ENCODE measurements at regions of chr12 and their contacts with region 1.

Region 1: GRCh38 chr12:91406920-91407341 is 224.3 kb upstream of the DCN start:
- DNase-seq: peak; percentile 100
- H3K4me3 ChIP-seq: no peak overlapping the region
- H3K27ac ChIP-seq: no peak overlapping the region
- H3K4me1 ChIP-seq: peaks cover 14% of the 10 kb centered on the region
- H3K27me3 ChIP-seq: peaks cover 1% of the 10 kb centered on the region
- CTCF ChIP-seq: peak; percentile 8 to 10

Region 2: DNA sequence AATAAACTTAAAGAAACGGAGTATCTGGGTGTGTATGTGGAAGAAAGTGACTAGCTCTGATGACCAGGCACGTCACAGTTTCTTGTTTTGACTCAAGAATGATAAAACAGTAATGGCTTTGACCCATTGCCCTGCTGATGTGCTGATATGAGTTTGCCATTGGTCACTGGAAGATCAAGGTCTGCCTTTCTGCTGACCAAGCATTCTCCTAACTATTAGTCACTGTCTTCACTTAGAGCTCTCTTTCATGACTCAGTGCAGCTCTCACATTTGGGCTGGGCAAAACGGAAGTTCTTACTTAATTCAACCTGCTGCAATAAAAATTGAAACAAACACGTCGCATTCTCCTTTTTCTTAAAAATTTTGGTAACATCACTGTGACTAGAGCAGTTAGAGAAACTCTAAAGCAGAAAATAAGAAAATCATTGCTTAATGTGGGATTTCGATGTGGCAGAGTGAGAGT is 372.0 kb after region 1 on chr12:
- CTCF ChIA-PET with region 1: no interaction called
- dilution Hi-C with region 1: no loop called
- in situ Hi-C with region 1: loop called in 1 of 2 experiments (anchors 10 kb)
- intact Hi-C with region 1: no loop called
- DNase-seq: peak; percentile 99
- H3K4me3 ChIP-seq: no peak overlapping the region
- H3K27ac ChIP-seq: peak overlapping the region; percentile 100
- H3K4me1 ChIP-seq: peaks cover 29% of the 10 kb centered on the region
- H3K27me3 ChIP-seq: no peaks in the 10 kb centered on the region
- CTCF ChIP-seq: no peak

Measured in mammary epithelial cell (primary cell).